PC-3 (cell line): ENCODE measurements at regions of chrX and their contacts with region 1.

Region 1: DNA sequence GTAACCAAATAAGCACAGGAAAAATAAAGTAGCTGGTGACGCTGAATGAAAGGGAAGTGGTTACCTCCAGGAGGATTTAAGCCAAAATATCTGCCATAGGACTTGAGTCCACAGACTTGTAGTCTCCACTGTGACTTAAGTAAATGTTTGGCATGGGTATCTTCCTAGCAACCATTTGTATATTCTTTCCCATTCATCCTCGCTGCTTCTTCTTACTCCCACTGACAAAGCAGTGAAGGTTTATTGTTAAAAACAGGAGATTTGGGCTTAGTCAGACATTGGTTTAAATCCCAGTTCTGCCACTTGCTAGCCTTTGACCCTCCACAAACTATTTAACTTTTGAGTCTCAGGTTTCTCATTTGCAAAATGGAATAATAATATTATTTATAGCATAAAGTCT is 22.3 kb downstream of the COL4A6 start:
- DNase-seq: peak; percentile 80
- ATAC-seq: peak; percentile 73
- H3K4me3 ChIP-seq: no peak overlapping the region
- H3K27ac ChIP-seq: peak overlapping the region; percentile 96
- H3K4me1 ChIP-seq: peaks cover 49% of the 10 kb centered on the region
- H3K27me3 ChIP-seq: no peaks in the 10 kb centered on the region
- CTCF ChIP-seq: no peak

Region 2: DNA sequence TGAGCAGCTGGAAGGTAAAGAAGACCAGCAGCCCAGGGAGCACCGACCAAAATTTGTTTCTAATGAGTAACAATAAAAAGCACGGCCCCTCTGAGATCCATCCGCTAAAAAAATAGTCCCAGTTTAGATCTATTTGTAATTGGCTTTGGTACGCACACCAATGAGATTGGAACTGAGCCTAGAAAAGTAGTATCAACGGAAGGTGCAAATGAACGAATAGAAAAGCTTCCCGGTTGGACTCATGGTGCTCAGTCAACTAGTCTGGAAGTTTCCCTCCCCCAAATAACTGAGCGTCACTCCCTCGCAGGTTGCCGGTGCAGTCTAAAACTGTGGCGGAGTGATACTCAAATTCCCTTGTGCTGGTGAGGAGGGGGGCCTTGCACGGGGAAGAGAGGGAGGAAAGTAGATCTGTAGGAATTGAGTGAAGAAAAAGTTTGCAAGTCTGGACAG is 23.6 kb after region 1 on chrX and contains the start of gene COL4A5:
- CTCF ChIA-PET with region 1: no interaction called
- POLR2A ChIA-PET with region 1: no interaction called
- intact Hi-C with region 1: loop called (anchors 1 kb)
- DNase-seq: peak; percentile 90
- ATAC-seq: peak; percentile 79
- H3K4me3 ChIP-seq: peak within 1 kb of the TSS; percentile 87
- H3K27ac ChIP-seq: peak within 1 kb of the TSS; percentile 65
- H3K4me1 ChIP-seq: peaks cover 23% of the 10 kb centered on the region
- H3K27me3 ChIP-seq: no peaks in the 10 kb centered on the region
- CTCF ChIP-seq: no peak
- total RNA-seq, gene COL4A5: 30.0 and 63.8 TPM in 2 replicates